H1 (cell line): ENCODE measurements at regions of chr9 and their contacts with region 1.

Region 1: GRCh38 chr9:77456829-77457437 is 191.2 kb downstream of the GNA14 start:
- DNase-seq: peak; percentile 79 to 92
- H3K4me3 ChIP-seq: no peak overlapping the region
- H3K27ac ChIP-seq: no peak overlapping the region
- H3K4me1 ChIP-seq: peaks cover 0 to 6% (median 2%) of the 10 kb centered on the region in 4 experiments; a peak in 4 of 7 replicates
- H3K27me3 ChIP-seq: no peaks in the 10 kb centered on the region
- CTCF ChIP-seq: peak; percentile 78 to 94 (median 84)
- EP300 ChIP-seq: no peak
- POLR2A ChIP-seq: no peak
- RAD21 ChIP-seq: peak; percentile 58 to 68

Region 2: GRCh38 chr9:77424993-77425392 is 31.9 kb before region 1 on chr9:
- CTCF ChIA-PET with region 1: interaction called, 384 read pairs
- POLR2A ChIA-PET with region 1: no interaction called
- DNase-seq: no peak
- H3K4me3 ChIP-seq: no peak overlapping the region
- H3K27ac ChIP-seq: no peak overlapping the region
- H3K4me1 ChIP-seq: no peaks in the 10 kb centered on the region
- H3K27me3 ChIP-seq: no peaks in the 10 kb centered on the region
- CTCF ChIP-seq: no peak
- EP300 ChIP-seq: no peak
- POLR2A ChIP-seq: no peak
- RAD21 ChIP-seq: no peak

Region 3: GRCh38 chr9:77469515-77470231 is 12.7 kb after region 1 on chr9:
- CTCF ChIA-PET with region 1: interaction called, 72 read pairs
- POLR2A ChIA-PET with region 1: no interaction called
- DNase-seq: no peak
- H3K4me3 ChIP-seq: no peak overlapping the region
- H3K27ac ChIP-seq: no peak overlapping the region
- H3K4me1 ChIP-seq: peaks cover 0 to 6% (median 0%) of the 10 kb centered on the region in 4 experiments; a peak in 2 of 7 replicates
- H3K27me3 ChIP-seq: no peaks in the 10 kb centered on the region
- CTCF ChIP-seq: no peak
- EP300 ChIP-seq: no peak
- POLR2A ChIP-seq: no peak
- RAD21 ChIP-seq: no peak

Region 4: DNA sequence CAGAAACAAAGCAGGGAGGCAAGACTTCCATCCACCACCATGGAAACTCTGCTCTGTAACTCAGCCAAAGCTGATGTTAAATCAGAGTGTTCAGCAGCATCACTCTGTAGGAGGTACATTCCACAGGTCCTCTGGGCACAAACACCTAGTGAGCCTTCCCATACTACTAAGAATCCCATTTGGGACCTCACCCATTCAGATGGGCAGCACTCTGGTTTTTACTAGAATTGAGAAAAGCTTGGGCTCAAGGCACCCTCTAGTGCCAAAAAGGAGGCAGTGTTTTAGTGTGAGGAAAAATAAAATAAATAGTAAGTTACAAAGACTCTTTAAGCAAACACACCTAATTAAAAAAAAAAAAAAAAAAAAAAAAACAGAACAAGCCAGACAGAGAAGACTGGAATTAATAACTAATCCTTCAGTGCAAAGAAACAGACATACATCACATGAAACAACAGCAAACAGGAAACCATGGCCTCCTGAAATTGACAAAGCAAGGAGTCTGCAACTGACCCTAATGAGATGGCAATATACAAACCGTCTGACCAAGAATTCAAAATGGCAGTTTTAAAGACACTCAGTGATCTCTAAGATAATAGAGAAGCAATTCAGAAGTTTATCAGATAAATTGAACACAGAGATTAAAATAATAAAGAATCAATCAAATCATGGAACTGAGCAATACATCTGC is 31.6 kb after region 1 on chr9:
- CTCF ChIA-PET with region 1: interaction called, 72 read pairs
- POLR2A ChIA-PET with region 1: no interaction called
- DNase-seq: no peak
- H3K4me3 ChIP-seq: no peak overlapping the region
- H3K27ac ChIP-seq: no peak overlapping the region
- H3K4me1 ChIP-seq: no peaks in the 10 kb centered on the region; a peak in 2 of 7 replicates
- H3K27me3 ChIP-seq: no peaks in the 10 kb centered on the region
- CTCF ChIP-seq: peak in 2 of 3 experiments; percentile 53 to 57; a peak in 3 of 4 replicates
- EP300 ChIP-seq: no peak
- POLR2A ChIP-seq: no peak
- RAD21 ChIP-seq: peak; percentile 80 to 81

Region 5: DNA sequence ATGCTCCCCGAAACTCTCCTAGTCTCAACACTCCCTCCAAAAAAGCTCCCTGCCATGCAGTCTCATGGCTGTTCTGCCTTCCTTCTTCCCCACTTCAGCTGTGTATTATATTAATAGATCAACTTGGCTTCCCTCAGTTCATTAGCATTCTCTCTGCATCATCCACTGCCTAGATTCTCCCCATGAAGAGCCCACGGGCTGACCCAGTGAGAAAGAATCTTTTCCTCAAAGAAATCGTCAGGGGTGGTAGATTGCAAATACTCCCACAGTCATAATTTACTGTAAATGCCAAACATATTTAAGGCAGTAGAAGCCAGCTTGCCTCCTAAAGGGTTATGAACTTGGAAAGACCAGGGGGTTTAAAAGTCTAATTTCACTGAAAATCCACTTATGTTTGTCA is 157.7 kb after region 1 on chr9:
- CTCF ChIA-PET with region 1: interaction called, 10 read pairs
- POLR2A ChIA-PET with region 1: no interaction called
- DNase-seq: no peak
- H3K4me3 ChIP-seq: no peak overlapping the region
- H3K27ac ChIP-seq: no peak overlapping the region
- H3K4me1 ChIP-seq: no peaks in the 10 kb centered on the region
- H3K27me3 ChIP-seq: no peaks in the 10 kb centered on the region
- CTCF ChIP-seq: no peak
- EP300 ChIP-seq: no peak
- POLR2A ChIP-seq: no peak
- RAD21 ChIP-seq: no peak

Region 6: GRCh38 chr9:77673941-77674791 is 217.2 kb after region 1 on chr9:
- CTCF ChIA-PET with region 1: interaction called, 12 read pairs
- POLR2A ChIA-PET with region 1: no interaction called
- DNase-seq: peak in 1 of 2 experiments; percentile 42
- H3K4me3 ChIP-seq: no peak overlapping the region
- H3K27ac ChIP-seq: no peak overlapping the region
- H3K4me1 ChIP-seq: no peaks in the 10 kb centered on the region
- H3K27me3 ChIP-seq: no peaks in the 10 kb centered on the region
- CTCF ChIP-seq: peak in 1 of 3 experiments; percentile 6; a peak in 1 of 4 replicates
- EP300 ChIP-seq: no peak
- POLR2A ChIP-seq: no peak
- RAD21 ChIP-seq: peak; percentile 32 to 54; a peak in 3 of 4 replicates

Region 7: GRCh38 chr9:77751341-77752091 is 294.6 kb after region 1 on chr9:
- CTCF ChIA-PET with region 1: interaction called, 62 read pairs
- POLR2A ChIA-PET with region 1: no interaction called
- DNase-seq: no peak
- H3K4me3 ChIP-seq: no peak overlapping the region
- H3K27ac ChIP-seq: no peak overlapping the region
- H3K4me1 ChIP-seq: no peaks in the 10 kb centered on the region; a peak in 2 of 7 replicates
- H3K27me3 ChIP-seq: no peaks in the 10 kb centered on the region
- CTCF ChIP-seq: peak; percentile 9 to 64 (median 64)
- EP300 ChIP-seq: no peak
- POLR2A ChIP-seq: no peak
- RAD21 ChIP-seq: peak; percentile 88 to 92